ENCODE measurements at regions of chr3 and their contacts with region 1.

Region 1: DNA sequence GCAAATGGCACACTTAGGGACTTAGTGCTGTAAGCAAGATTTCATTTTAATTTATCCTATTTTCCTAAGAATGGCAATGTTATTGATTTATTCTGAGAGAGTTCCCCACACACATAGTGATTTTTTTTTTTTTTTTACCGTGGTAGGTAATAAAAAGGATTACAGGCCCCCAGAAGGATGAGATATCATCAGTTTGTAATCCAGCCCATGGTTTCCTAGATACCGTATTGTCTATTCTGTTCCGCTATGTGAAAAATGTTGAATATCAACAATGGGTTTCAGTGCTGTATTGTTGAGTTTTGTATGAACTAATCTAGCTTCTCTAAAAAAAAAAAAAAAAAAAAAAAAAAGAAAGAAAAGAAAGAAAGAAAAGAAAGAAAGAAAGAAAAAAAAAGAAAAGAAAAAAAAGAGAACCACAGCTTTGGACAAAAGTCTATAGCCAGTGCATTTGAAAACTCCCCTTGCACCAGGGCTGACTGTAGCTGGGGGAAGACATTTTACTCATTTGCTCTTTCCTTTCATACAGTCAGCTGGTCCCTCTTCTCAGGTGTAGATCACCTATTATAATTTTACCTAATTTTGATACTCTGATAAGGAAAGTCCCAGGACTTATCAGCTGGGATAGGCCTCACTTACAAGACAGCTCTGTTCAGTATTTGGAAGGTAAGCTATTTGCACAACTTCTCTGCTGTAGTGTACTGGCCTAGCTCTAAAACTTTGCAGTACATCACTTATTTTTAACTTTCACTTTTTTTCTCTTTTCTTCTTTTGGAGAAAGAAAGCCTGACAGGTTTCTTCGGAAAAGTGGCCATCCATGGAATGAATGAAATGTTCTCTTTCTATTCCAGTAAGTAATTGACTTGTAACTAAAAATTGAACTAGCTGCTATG is 101.4 kb upstream of the SOX2 start:
- DNase-seq: no peak
- H3K4me3 ChIP-seq: peak overlapping the region in 57 of 59 donors; percentile 13 to 66 (median 42)
- H3K27ac ChIP-seq: peak overlapping the region; percentile 2 to 95 (median 85)
- H3K27me3 ChIP-seq: no peaks in the 10 kb centered on the region
- CTCF ChIP-seq: peak in 2 of 56 donors; percentile 13 to 16

Region 2: DNA sequence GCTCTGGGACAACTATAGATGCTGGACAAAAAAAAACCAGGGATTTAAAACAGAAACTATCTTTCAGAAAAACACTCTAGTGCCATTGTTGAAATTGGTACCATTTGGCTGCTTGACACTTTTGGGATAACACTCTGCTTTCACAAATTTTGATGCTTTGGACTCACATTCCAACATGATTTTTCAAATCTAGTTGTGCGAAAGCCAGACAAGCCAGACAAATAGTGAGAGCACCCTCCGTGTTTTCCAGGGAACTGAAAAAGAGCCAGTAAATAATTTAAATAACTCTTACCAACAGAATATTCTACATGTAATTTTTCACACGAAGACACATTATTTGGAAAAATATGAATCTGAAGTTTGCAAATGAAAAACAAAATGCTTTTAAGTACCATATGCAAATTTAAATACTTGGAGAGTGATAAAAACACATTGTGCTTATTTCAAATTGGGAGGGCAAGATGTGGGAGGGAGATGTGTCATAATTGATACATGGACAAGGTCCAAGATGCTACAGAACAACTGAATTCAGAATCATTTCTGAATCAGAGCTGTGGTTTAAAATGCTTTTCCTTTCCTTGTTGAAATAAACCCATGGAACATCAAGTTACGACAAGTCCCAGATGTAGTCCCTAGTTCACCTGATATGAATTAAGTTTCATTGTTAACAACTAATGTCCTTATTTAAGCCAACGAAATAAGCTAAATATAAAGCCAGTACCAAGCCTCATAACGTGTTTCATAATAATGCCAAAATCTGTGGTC is 42.8 kb before region 1 on chr3:
- intact Hi-C with region 1: loop called in 1 of 2 experiments (anchors 10 kb)
- DNase-seq: no peak
- H3K4me3 ChIP-seq: peak overlapping the region in 53 of 59 donors; percentile 4 to 58 (median 36)
- H3K27ac ChIP-seq: peak overlapping the region; percentile 23 to 92 (median 82)
- H3K27me3 ChIP-seq: no peaks in the 10 kb centered on the region
- CTCF ChIP-seq: peak in 1 of 56 donors; percentile 2

Region 3: DNA sequence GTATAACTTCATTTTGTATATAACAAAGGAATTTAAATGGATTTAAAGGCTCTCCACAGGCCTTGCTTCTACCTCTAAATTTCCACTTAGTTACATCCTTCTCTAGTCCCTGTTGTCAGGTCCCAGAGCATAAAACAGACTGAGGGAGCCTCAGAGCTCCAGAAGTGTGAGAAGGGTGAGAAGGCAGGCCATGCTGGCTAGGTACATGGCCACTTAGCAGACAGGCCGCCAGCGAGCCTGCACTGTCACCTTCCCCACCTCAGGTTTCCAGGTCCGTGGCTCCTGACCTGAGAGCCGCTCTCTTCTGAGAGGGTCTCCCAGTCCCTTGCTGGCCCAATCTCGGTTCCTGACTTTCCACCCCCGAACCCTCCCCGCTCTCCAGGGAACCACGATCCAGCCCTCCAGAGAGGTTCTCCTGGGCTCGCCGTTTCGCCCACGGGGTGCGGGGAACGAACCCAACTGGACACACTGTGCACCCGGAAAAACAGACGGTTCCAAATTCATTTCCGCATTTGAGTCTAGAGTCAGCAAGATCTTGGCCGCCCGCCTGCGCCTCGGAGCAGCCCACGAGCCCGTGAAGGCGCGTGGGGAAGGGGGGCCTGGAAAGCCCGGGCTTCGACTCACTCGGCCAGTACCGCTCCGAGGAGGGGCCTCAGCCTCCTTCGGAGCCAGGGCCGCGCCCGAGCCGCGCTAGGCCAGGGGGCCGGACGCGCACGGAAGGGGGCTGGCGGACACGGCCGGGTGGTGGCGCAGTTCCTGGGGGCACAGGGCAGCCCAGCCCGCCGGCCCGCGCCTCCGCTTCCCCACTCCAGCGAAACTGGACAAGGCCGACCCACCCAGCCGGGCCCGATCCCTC is 84.7 kb after region 1 on chr3:
- intact Hi-C with region 1: loop called (anchors 5 kb)
- DNase-seq: peak in 4 of 10 donors; percentile 31 to 62 (median 56)
- H3K4me3 ChIP-seq: peak overlapping the region in 58 of 59 donors; percentile 2 to 93 (median 62)
- H3K27ac ChIP-seq: peak overlapping the region; percentile 77 to 100 (median 98)
- H3K27me3 ChIP-seq: peaks cover 0 to 40% (median 7%) of the 10 kb centered on the region in 45 donors
- CTCF ChIP-seq: peak in 14 of 56 donors; percentile 8 to 41 (median 14)